BJ (cell line): ENCODE measurements at regions of chr6 and their contacts with region 1.

Region 1: DNA sequence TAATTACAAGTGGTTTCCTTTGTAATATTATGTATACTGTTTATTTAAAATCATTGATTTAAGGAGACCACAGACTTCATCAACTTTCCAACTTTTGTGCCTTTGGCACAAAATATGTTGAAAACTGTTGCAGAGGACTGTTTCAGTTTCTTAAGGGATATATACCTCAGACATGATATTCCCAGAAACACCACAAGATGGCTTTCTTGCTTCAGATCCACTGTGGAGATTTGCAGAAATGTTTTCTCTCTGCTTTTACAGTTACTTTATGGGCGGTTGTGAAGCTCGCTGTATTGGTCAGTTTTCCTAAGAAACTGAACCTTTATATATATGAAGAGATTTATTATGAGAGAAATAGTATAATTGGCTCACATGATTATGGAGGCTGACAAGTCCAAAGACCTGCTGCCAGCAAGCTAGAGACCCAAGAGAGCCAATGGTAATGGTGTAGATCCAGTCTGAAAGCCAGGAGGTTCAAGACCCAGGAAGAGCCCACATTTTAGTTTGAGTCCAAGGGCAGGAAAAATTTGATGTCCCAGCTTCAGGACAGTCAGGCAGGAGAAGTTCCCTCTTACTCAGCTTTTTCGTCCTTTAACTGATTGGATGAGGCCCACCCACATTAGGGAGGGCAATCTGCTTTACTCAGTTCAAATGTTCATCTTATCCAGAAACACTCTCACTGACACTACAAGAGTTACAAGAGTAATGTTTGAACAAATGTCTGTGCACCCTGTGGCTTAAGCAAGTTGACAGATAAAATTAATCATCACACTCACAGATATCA is 12.8 kb downstream of the ME1 start:
- DNase-seq: no peak
- H3K4me3 ChIP-seq: no peak overlapping the region
- H3K27me3 ChIP-seq: no peaks in the 10 kb centered on the region
- CTCF ChIP-seq: peak; percentile 66

Region 2: GRCh38 chr6:83505356-83505755 is 87.3 kb after region 1 on chr6:
- CTCF ChIA-PET with region 1: interaction called, 160 read pairs
- POLR2A ChIA-PET with region 1: no interaction called
- DNase-seq: no peak
- H3K4me3 ChIP-seq: no peak overlapping the region
- H3K27me3 ChIP-seq: no peaks in the 10 kb centered on the region
- CTCF ChIP-seq: no peak